Activated naive CD4-positive, alpha-beta T cell treated with anti-CD3 and anti-CD28 coated beads for 36 hours (primary cell): ENCODE measurements at regions of chr20 and their contacts with region 1.

Region 1: DNA sequence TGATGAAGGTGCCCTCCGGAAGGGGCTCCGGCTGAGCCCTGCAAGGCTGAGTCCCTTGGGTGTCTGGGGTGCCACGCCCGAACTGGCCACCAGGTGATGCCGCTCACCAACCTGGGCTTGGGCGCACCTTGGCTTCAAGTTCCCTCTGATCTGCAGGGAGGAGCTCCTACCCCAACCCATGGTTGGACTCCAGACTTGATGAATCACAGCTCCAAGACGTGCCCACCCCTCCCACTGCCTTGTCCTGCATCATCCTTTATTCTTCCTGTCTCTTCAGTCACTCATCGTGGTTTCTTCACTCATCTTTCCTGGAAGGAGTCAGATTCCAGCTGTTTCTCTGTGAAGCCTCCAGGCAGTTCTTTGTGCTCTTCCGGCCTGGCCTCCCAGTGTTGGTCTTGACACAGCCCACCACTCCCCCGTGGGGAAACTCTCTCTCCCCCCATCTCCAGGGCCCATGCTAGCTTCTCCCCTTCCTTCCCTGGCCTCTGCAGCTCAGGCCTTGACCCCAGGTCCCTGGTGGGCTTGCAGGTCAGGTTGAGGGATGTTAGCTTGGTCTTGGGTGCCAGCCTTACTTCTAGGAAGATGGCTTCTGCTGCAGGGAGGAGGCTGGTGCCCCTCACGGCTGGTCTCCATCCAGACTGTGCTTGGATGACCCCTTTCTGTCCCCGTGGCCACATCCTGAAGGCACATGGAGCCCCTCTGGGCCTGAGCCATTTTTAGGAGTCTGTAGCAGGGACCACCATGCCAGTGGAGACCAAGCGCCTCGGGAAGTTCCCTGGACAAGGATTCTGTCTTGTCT is 2.6 kb upstream of the ZBP1 start:
- DNase-seq: peak; percentile 88
- H3K4me3 Mint-ChIP-seq: no peak overlapping the region
- H3K27ac Mint-ChIP-seq: no peak overlapping the region
- H3K4me1 Mint-ChIP-seq: peaks cover 71% of the 10 kb centered on the region
- H3K27me3 Mint-ChIP-seq: no peaks in the 10 kb centered on the region

Region 2: DNA sequence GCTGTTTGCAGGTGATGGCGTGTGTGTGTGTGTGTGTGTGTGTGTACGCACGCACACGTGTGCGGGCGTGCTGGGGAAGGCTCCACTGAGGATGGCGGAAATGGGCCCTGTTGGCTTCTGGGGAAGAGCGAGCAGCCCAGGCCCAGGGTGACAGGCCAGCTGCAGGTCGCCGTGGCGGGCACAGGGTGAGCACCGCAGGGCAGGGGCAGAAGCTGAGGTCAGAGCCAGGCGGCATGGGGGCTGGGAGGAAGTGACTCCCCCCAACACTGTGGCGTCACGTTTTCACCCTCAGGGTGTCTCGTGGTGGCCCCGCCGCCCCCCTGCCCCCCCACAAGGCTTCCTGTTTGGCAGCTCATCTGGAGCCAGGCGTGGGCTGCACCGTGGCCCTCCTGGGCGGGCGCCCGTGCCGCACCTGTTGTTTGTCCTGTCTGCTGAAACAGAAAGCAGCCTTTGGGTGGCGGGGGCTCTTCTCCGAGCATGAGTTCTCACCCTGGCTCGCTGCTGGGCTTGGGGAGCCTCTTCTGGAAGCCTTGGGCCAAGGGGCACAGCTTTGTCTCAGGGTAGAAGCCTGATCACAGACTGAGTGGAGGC is 224.5 kb before region 1 on chr20:
- CTCF ChIA-PET with region 1: no interaction called
- intact Hi-C with region 1: loop called (anchors 2 kb)
- DNase-seq: peak; percentile 91
- H3K4me3 Mint-ChIP-seq: peak overlapping the region; percentile 80
- H3K27ac Mint-ChIP-seq: peak overlapping the region; percentile 99
- H3K4me1 Mint-ChIP-seq: peaks cover 93% of the 10 kb centered on the region
- H3K27me3 Mint-ChIP-seq: no peaks in the 10 kb centered on the region

Region 3: DNA sequence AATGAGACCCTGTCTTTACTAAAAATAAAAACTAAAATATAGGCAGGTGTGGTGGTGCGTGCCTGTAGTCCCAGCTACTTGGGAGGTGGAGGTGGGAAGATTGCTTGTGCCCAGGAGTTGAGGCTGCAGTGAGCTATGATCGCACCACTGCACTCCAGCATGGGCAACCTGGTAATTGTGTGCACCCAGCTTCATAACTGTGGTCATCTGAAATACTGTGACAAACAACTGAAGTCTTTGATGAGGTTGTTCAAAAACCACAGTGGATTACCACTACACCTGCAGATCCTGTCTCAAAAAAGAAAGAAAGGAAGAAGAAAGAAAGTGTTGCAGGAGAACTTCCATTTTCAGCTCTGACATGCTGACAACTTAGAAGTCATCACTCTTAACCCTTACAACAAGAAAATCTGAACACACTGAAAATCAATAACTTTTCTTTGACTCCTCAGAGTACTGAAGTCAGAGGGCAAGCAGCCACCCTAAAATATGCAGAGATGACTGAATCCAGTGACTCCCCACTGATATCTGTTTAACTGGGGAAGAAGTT is 11.2 kb after region 1 on chr20:
- CTCF ChIA-PET with region 1: interaction called, 32 read pairs
- intact Hi-C with region 1: loop called (anchors 2 kb)
- DNase-seq: no peak
- H3K4me3 Mint-ChIP-seq: no peak overlapping the region
- H3K27ac Mint-ChIP-seq: no peak overlapping the region
- H3K4me1 Mint-ChIP-seq: peaks cover 39% of the 10 kb centered on the region
- H3K27me3 Mint-ChIP-seq: no peaks in the 10 kb centered on the region

Region 4: GRCh38 chr20:57698117-57698866 is 75.5 kb after region 1 on chr20:
- CTCF ChIA-PET with region 1: no interaction called
- intact Hi-C with region 1: loop called (anchors 1 kb)
- DNase-seq: peak; percentile 92
- H3K4me3 Mint-ChIP-seq: no peak overlapping the region
- H3K27ac Mint-ChIP-seq: peak overlapping the region; percentile 85
- H3K4me1 Mint-ChIP-seq: peaks cover 44% of the 10 kb centered on the region
- H3K27me3 Mint-ChIP-seq: no peaks in the 10 kb centered on the region

Region 5: GRCh38 chr20:58014628-58015315 is 392.0 kb after region 1 on chr20:
- CTCF ChIA-PET with region 1: no interaction called
- intact Hi-C with region 1: loop called (anchors 1 kb)
- DNase-seq: peak; percentile 57
- H3K4me3 Mint-ChIP-seq: no peak overlapping the region
- H3K27ac Mint-ChIP-seq: peak overlapping the region; percentile 15
- H3K4me1 Mint-ChIP-seq: peaks cover 22% of the 10 kb centered on the region
- H3K27me3 Mint-ChIP-seq: peaks cover 13% of the 10 kb centered on the region

Region 6: GRCh38 chr20:58179432-58180099 is 556.8 kb after region 1 on chr20:
- CTCF ChIA-PET with region 1: no interaction called
- intact Hi-C with region 1: loop called (anchors 1 kb)
- DNase-seq: peak; percentile 64
- H3K4me3 Mint-ChIP-seq: peak overlapping the region; percentile 42
- H3K27ac Mint-ChIP-seq: no peak overlapping the region
- H3K4me1 Mint-ChIP-seq: peaks cover 9% of the 10 kb centered on the region
- H3K27me3 Mint-ChIP-seq: peaks cover 12% of the 10 kb centered on the region

Region 7: GRCh38 chr20:58457083-58457695 is 834.4 kb after region 1 on chr20:
- CTCF ChIA-PET with region 1: no interaction called
- intact Hi-C with region 1: no loop called
- DNase-seq: no peak
- H3K4me3 Mint-ChIP-seq: no peak overlapping the region
- H3K27ac Mint-ChIP-seq: peak overlapping the region; percentile 53
- H3K4me1 Mint-ChIP-seq: no peaks in the 10 kb centered on the region
- H3K27me3 Mint-ChIP-seq: no peaks in the 10 kb centered on the region

Region 8: GRCh38 chr20:59055295-59055694 is 1432.5 kb after region 1 on chr20:
- CTCF ChIA-PET with region 1: no interaction called
- intact Hi-C with region 1: no loop called
- DNase-seq: no peak
- H3K4me3 Mint-ChIP-seq: no peak overlapping the region
- H3K27ac Mint-ChIP-seq: no peak overlapping the region
- H3K4me1 Mint-ChIP-seq: no peaks in the 10 kb centered on the region
- H3K27me3 Mint-ChIP-seq: peaks cover 5% of the 10 kb centered on the region

Region 9: GRCh38 chr20:59253779-59254319 is 1631.1 kb after region 1 on chr20:
- CTCF ChIA-PET with region 1: no interaction called
- intact Hi-C with region 1: loop called (anchors 10 kb)
- DNase-seq: peak; percentile 64
- H3K4me3 Mint-ChIP-seq: peak overlapping the region; percentile 16
- H3K27ac Mint-ChIP-seq: peak overlapping the region; percentile 92
- H3K4me1 Mint-ChIP-seq: peaks cover 50% of the 10 kb centered on the region
- H3K27me3 Mint-ChIP-seq: no peaks in the 10 kb centered on the region